ENCODE measurements at regions of chr6 and their contacts with region 1.

Region 1: GRCh38 chr6:36340618-36341454 is 4.1 kb upstream of the BNIP5 start:
- DNase-seq: peak; percentile 84
- ATAC-seq: peak; percentile 83
- H3K4me3 Mint-ChIP-seq: no peak overlapping the region
- H3K27ac Mint-ChIP-seq: no peak overlapping the region
- H3K4me1 Mint-ChIP-seq: peaks cover 14% of the 10 kb centered on the region
- H3K27me3 Mint-ChIP-seq: peaks cover 15% of the 10 kb centered on the region

Region 2: GRCh38 chr6:36131511-36132245 is 209.2 kb before region 1 on chr6:
- CTCF ChIA-PET with region 1: interaction called, 3 read pairs
- POLR2A ChIA-PET with region 1: no interaction called
- intact Hi-C with region 1: loop called in 1 of 2 experiments (anchors 5 kb)
- DNase-seq: peak; percentile 80
- ATAC-seq: peak; percentile 84
- H3K4me3 Mint-ChIP-seq: peak overlapping the region; percentile 84
- H3K27ac Mint-ChIP-seq: peak overlapping the region; percentile 96
- H3K4me1 Mint-ChIP-seq: peaks cover 55% of the 10 kb centered on the region
- H3K27me3 Mint-ChIP-seq: no peaks in the 10 kb centered on the region

Region 3: GRCh38 chr6:36312854-36313648 is 27.8 kb before region 1 on chr6:
- CTCF ChIA-PET with region 1: interaction called, 11 read pairs
- POLR2A ChIA-PET with region 1: no interaction called
- intact Hi-C with region 1: no loop called
- DNase-seq: no peak
- ATAC-seq: no peak
- H3K4me3 Mint-ChIP-seq: no peak overlapping the region
- H3K27ac Mint-ChIP-seq: no peak overlapping the region
- H3K4me1 Mint-ChIP-seq: no peaks in the 10 kb centered on the region
- H3K27me3 Mint-ChIP-seq: peaks cover 2% of the 10 kb centered on the region

Region 4: GRCh38 chr6:36326356-36326995 is 14.4 kb before region 1 on chr6:
- CTCF ChIA-PET with region 1: interaction called, 11 read pairs
- POLR2A ChIA-PET with region 1: interaction called, 3 read pairs
- intact Hi-C with region 1: no loop called
- DNase-seq: no peak
- ATAC-seq: no peak
- H3K4me3 Mint-ChIP-seq: no peak overlapping the region
- H3K27ac Mint-ChIP-seq: no peak overlapping the region
- H3K4me1 Mint-ChIP-seq: no peaks in the 10 kb centered on the region
- H3K27me3 Mint-ChIP-seq: no peaks in the 10 kb centered on the region

Region 5: GRCh38 chr6:36350681-36351571 is 10.1 kb after region 1 on chr6:
- CTCF ChIA-PET with region 1: interaction called, 19 read pairs
- POLR2A ChIA-PET with region 1: no interaction called
- intact Hi-C with region 1: no loop called
- DNase-seq: no peak
- ATAC-seq: no peak
- H3K4me3 Mint-ChIP-seq: no peak overlapping the region
- H3K27ac Mint-ChIP-seq: no peak overlapping the region
- H3K4me1 Mint-ChIP-seq: peaks cover 7% of the 10 kb centered on the region
- H3K27me3 Mint-ChIP-seq: peaks cover 5% of the 10 kb centered on the region

Region 6: GRCh38 chr6:36360241-36361054 is 19.6 kb after region 1 on chr6:
- CTCF ChIA-PET with region 1: interaction called, 22 read pairs
- POLR2A ChIA-PET with region 1: no interaction called
- intact Hi-C with region 1: loop called (anchors 1 kb)
- DNase-seq: peak; percentile 85
- ATAC-seq: peak; percentile 81
- H3K4me3 Mint-ChIP-seq: no peak overlapping the region
- H3K27ac Mint-ChIP-seq: no peak overlapping the region
- H3K4me1 Mint-ChIP-seq: peaks cover 22% of the 10 kb centered on the region
- H3K27me3 Mint-ChIP-seq: peaks cover 6% of the 10 kb centered on the region